ENCODE measurements at regions of chrX and their contacts with region 1.

Region 1: DNA sequence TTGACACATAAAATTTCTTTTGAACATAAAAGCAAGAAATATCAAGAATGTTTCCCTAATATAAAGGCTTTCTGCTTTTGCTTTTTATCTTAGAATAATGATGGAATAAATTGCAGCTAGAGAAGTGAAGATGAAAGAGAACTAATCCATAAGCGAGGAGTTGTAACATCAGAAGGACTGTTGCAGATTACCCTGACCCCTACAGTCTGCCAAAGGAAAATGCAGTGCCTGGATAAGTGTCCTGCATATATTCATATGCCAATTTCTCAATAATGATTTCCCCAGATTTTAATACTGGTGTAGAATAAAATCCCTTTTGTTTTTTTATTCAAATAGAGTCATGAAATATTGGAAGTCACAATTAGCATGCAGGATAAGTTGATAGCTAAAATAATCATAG is 115.9 kb downstream of the MAGEC2 start:
- DNase-seq: no peak
- H3K4me3 ChIP-seq: no peak overlapping the region
- H3K27ac ChIP-seq: no peak overlapping the region
- H3K4me1 ChIP-seq: no peaks in the 10 kb centered on the region
- H3K27me3 ChIP-seq: no peaks in the 10 kb centered on the region
- CTCF ChIP-seq: no peak

Region 2: DNA sequence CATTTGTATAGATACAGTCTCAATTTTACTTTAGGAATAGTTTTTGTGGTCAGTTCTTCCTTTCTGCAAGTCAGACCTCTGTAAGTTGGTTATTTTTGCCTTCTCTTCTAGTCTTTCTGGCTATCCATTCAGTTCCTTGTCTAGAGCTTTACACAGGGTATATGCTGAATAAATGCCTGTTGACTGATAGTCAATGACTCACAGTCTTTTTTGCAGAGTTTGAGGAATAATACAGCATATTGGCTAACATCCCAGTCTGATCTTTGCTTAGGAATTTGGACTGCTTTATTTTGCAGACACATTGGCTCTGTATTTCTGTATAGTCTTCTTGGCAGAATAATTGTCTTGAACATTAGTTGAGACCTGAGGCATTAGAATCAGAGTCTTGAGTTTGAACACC is 53.1 kb before region 1 on chrX:
- CTCF ChIA-PET with region 1: no interaction called
- dilution Hi-C with region 1: loop called (anchors 5 kb)
- in situ Hi-C with region 1: no loop called
- intact Hi-C with region 1: no loop called
- DNase-seq: no peak
- H3K4me3 ChIP-seq: no peak overlapping the region
- H3K27ac ChIP-seq: no peak overlapping the region
- H3K4me1 ChIP-seq: no peaks in the 10 kb centered on the region
- H3K27me3 ChIP-seq: no peaks in the 10 kb centered on the region
- CTCF ChIP-seq: no peak

Region 3: DNA sequence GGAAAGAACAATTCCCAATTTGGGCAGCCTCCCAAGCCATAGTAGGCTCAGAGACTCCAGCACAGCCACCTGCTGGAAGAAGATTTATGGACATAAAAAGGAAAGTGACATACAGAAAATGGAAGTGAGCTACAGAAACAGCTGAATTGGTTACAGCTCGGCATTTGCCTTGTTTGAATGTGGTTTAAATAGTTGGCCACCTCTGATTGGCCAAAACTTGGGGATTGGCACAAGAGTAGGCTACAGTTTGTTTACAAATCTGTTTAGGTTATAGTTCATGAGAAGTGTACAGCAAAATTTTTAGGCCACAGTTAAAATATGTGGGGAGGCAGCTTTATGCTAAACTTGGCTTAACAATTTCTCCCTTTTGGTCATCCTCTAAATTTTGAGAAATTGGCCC is 35.1 kb before region 1 on chrX:
- CTCF ChIA-PET with region 1: no interaction called
- dilution Hi-C with region 1: no loop called
- in situ Hi-C with region 1: no loop called
- intact Hi-C with region 1: no loop called
- DNase-seq: no peak
- H3K4me3 ChIP-seq: no peak overlapping the region
- H3K27ac ChIP-seq: no peak overlapping the region
- H3K4me1 ChIP-seq: no peaks in the 10 kb centered on the region
- H3K27me3 ChIP-seq: no peaks in the 10 kb centered on the region
- CTCF ChIP-seq: no peak